ENCODE measurements at regions of chr1 and their contacts with region 1.

Region 1: GRCh38 chr1:31548907-31549808 is 27.2 kb upstream of the TINAGL1 start:
- DNase-seq: peak; percentile 79
- ATAC-seq: peak; percentile 98
- H3K4me3 Mint-ChIP-seq: peak overlapping the region; percentile 17
- H3K27ac Mint-ChIP-seq: no peak overlapping the region
- H3K4me1 Mint-ChIP-seq: peaks cover 11% of the 10 kb centered on the region
- H3K27me3 Mint-ChIP-seq: peaks cover 6% of the 10 kb centered on the region
- CTCF ChIP-seq: peak; percentile 53

Region 2: GRCh38 chr1:31166462-31166861 is 382.7 kb before region 1 on chr1:
- CTCF ChIA-PET with region 1: interaction called, 5 read pairs
- POLR2A ChIA-PET with region 1: no interaction called
- intact Hi-C with region 1: loop called (anchors 1 kb)
- DNase-seq: no peak
- ATAC-seq: no peak
- H3K4me3 Mint-ChIP-seq: no peak overlapping the region
- H3K27ac Mint-ChIP-seq: no peak overlapping the region
- H3K4me1 Mint-ChIP-seq: peaks cover 3% of the 10 kb centered on the region
- H3K27me3 Mint-ChIP-seq: peaks cover 5% of the 10 kb centered on the region
- CTCF ChIP-seq: no peak

Region 3: DNA sequence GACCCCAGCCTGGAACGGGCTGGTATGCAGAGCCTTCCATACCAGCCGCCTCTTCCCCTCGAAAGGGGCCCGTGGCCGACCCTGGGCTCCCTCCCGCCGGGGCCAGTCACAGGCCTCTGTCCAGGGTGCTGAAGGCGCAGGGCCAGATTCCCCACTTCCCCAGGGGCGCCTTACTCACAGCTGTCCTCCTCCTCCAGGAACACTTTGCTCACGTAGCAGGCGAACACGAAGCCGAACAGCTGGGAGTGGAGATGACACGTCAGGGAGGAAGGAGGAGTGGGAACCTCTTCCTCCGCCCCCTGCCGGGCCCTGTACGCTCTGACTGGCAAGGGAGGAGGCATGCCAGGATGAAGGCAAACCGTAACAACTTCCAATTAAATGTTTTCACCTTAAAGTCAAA is 366.8 kb before region 1 on chr1:
- CTCF ChIA-PET with region 1: interaction called, 33 read pairs
- POLR2A ChIA-PET with region 1: no interaction called
- intact Hi-C with region 1: loop called (anchors 1 kb)
- DNase-seq: peak; percentile 55
- ATAC-seq: peak; percentile 68
- H3K4me3 Mint-ChIP-seq: no peak overlapping the region
- H3K27ac Mint-ChIP-seq: no peak overlapping the region
- H3K4me1 Mint-ChIP-seq: peaks cover 5% of the 10 kb centered on the region
- H3K27me3 Mint-ChIP-seq: peaks cover 45% of the 10 kb centered on the region
- CTCF ChIP-seq: no peak

Region 4: DNA sequence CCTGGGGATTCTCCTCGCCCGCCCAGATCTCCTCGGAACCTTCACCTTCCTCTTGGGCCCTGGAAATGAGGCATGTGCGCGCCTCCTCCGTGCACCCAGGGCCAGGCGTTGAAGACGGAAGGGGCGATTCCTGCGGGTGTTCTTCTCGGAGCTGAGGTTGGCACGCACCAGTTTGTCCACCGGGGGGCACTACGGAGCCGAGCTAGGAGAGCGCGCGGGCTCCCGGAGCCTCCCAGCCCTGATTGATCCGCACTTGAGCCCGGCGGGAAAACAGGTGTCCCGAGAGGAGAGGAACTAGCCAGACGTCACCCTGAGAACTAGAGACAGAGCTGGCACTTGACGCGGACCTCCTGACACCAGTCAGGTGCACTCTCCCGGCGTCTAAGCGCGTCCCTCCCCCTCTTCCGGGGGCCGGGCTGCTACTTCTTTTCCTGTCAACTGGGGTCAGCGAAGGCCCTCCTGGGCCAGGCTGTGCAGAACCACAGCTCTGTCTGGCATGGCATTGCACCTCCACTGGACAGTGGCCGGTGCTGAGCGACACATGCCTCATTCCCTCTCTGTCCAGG is 154.4 kb before region 1 on chr1:
- CTCF ChIA-PET with region 1: interaction called, 43 read pairs
- POLR2A ChIA-PET with region 1: interaction called, 3 read pairs
- intact Hi-C with region 1: loop called (anchors 1 kb)
- DNase-seq: peak; percentile 72
- ATAC-seq: peak; percentile 98
- H3K4me3 Mint-ChIP-seq: peak overlapping the region; percentile 85
- H3K27ac Mint-ChIP-seq: no peak overlapping the region
- H3K4me1 Mint-ChIP-seq: peaks cover 14% of the 10 kb centered on the region
- H3K27me3 Mint-ChIP-seq: no peaks in the 10 kb centered on the region
- CTCF ChIP-seq: no peak

Region 5: DNA sequence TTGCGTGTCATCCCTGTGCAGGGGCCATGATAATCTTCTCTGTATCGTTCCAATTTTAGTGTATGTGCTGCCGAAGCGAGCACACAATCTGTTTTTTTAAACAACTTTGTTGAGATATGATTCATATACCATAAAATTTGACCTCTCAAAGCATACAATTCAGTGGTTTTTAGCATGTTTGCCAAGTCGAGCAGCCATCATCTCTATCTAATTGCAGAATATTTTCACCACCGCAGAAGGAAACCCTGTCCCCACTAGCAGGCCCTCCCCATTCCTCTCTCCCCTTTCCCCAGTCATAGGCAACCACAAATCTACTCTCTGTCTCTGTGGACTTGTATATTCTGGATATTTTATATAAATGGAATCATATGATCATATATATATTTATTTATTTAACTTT is 51.6 kb before region 1 on chr1:
- CTCF ChIA-PET with region 1: no interaction called
- POLR2A ChIA-PET with region 1: no interaction called
- intact Hi-C with region 1: no loop called
- DNase-seq: no peak
- ATAC-seq: no peak
- H3K4me3 Mint-ChIP-seq: no peak overlapping the region
- H3K27ac Mint-ChIP-seq: no peak overlapping the region
- H3K4me1 Mint-ChIP-seq: peaks cover 4% of the 10 kb centered on the region
- H3K27me3 Mint-ChIP-seq: peaks cover 3% of the 10 kb centered on the region
- CTCF ChIP-seq: no peak

Region 6: GRCh38 chr1:31760471-31761470 is 211.6 kb after region 1 on chr1:
- CTCF ChIA-PET with region 1: no interaction called
- POLR2A ChIA-PET with region 1: no interaction called
- intact Hi-C with region 1: no loop called
- DNase-seq: peak; percentile 70
- ATAC-seq: peak; percentile 70
- H3K4me3 Mint-ChIP-seq: peak overlapping the region; percentile 77
- H3K27ac Mint-ChIP-seq: no peak overlapping the region
- H3K4me1 Mint-ChIP-seq: peaks cover 32% of the 10 kb centered on the region
- H3K27me3 Mint-ChIP-seq: peaks cover 3% of the 10 kb centered on the region
- CTCF ChIP-seq: no peak